Heart right ventricle (tissue), 16 donors: ENCODE measurements at regions of chr1 and their contacts with region 1.

Region 1: DNA sequence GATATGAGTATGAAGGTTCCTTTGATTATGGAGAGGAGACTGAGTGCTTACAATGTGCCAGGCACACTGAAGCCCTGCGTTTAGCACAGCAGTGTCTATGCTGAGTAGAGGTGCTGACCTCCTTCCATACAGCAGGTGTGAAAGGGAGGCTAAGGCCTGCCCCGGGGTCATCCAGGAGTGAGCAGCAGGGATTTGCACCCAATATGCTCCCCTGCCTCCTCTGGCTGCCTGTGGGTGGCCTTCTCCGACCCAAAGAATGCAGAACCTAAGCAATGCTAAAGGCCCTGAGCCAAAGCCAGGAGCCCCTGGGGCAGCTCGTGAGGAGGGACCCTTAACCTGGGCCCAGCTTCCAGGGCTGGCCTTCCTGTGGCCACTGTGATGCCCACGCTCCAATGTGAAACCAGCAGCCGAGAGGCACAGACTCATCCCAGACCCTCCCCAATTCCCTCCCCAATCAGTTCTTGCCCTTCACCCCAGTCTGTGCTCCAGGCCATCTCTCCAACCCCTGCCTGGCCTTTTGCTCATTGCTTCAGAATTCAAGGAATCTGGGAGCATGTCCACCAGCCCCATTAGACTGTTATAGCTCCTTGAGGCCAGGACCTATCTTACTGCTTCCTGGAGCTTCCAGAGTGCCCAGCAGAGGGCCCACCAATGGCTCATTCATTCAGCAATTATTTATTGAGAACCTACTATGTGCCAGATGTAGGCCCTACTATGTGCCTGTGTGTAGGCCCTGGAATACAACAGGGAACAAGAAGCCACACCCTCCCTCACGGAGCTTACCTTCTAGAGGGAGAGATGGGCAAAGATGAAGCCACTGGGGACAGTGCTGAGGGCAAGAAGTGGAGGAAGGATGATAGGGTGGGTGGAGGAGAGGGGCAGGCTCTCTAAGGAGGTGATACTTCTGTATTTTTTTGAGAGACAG is 53.3 kb downstream of the TAS1R2 start:
- DNase-seq: no peak
- ATAC-seq: no peak
- H3K4me3 ChIP-seq: no peak overlapping the region
- H3K27ac ChIP-seq: no peak overlapping the region
- H3K4me1 ChIP-seq: no peaks in the 10 kb centered on the region
- H3K27me3 ChIP-seq: peaks cover 0 to 28% (median 10%) of the 10 kb centered on the region in 7 donors
- CTCF ChIP-seq: no peak

Region 2: DNA sequence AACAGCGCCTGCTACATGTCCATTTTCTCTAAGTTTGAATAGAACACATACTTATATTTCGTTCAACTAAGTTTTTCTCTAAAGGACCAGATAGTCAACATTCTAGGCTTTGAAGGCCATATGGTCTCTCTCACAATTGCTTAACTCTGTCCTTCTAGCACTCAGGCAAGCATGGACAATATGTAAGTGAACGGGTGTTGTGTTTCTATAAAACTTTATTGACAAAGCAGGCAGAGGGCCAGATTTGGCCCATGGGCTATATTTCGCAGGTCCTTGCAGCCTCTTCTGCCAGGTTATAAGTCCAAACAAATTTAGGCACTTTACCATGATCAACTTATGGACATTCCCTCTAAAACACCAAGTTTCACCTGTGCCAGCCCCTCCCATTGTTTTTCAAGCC is 304.4 kb before region 1 on chr1:
- intact Hi-C with region 1: loop called in 1 of 10 experiments (anchors 5 kb)
- DNase-seq: no peak
- ATAC-seq: no peak
- H3K4me3 ChIP-seq: no peak overlapping the region
- H3K27ac ChIP-seq: no peak overlapping the region
- H3K4me1 ChIP-seq: no peaks in the 10 kb centered on the region
- H3K27me3 ChIP-seq: peaks cover 0 to 47% (median 25%) of the 10 kb centered on the region in 7 donors
- CTCF ChIP-seq: no peak

Region 3: DNA sequence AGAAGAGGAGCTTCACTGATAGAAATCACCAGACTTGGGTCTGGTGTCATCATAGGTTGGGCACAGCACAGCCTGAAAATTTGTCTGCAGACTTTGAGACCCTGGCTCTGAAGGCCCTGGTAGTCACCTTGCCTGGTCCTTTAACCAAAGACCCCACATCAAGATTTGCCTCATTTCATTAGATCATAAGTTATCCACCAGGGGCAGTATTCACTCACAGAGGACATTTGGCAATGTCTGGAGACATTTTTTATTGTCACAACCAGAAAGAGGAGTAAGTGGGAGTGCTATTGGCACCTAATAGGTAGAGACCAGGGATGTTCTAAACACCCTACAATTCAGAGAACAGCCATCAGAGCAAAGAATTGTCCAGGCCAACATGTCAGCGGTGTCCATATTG is 197.7 kb before region 1 on chr1:
- intact Hi-C with region 1: loop called in 1 of 10 experiments (anchors 5 kb)
- DNase-seq: no peak
- ATAC-seq: no peak
- H3K4me3 ChIP-seq: no peak overlapping the region
- H3K27ac ChIP-seq: no peak overlapping the region
- H3K4me1 ChIP-seq: no peaks in the 10 kb centered on the region
- H3K27me3 ChIP-seq: peaks cover 0 to 84% (median 61%) of the 10 kb centered on the region in 7 donors
- CTCF ChIP-seq: no peak